ENCODE measurements at regions of chr6 and their contacts with region 1.

Region 1: DNA sequence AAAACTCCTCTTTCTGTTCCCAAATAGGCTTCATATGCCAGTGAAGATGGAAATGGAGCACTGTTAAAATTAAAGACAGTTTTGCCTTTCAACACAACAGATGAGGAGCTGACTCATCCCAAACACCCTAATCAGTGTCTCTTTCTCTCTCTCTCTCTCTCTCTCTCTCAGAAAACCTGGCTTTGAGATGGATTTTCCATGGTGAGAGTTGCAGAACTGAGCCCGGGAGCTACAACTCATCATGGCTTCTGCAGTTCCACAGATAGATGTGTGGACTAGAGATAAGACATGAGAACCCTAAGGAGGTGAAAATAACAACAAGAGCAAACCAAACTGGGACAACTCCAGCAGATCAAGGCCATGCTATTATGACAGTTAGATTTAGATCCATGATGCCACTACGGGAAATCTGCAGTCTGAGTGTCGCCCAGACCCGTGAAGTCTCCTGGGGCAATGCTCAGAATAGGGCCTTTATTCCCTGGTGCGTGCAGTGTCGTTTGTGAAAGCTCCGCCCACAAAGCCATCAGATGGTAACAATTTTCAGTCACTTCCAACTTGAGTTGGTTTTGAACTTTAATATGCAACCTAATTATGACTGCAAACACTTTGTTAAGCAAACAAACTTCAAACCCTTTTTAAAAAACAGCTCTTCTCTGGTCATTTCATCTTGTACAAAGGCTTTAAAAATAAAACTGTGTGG is 338.2 kb upstream of the PREP start:
- DNase-seq: no peak
- ATAC-seq: no peak; the same call in 1 of the 3 replicates
- H3K4me3 ChIP-seq: no peak overlapping the region
- H3K27ac ChIP-seq: no peak overlapping the region
- H3K4me1 ChIP-seq: peaks cover 15% of the 10 kb centered on the region
- H3K27me3 ChIP-seq: no peaks in the 10 kb centered on the region
- CTCF ChIP-seq: no peak
- EP300 ChIP-seq: no peak
- POLR2A ChIP-seq: no peak
- RAD21 ChIP-seq: no peak

Region 2: DNA sequence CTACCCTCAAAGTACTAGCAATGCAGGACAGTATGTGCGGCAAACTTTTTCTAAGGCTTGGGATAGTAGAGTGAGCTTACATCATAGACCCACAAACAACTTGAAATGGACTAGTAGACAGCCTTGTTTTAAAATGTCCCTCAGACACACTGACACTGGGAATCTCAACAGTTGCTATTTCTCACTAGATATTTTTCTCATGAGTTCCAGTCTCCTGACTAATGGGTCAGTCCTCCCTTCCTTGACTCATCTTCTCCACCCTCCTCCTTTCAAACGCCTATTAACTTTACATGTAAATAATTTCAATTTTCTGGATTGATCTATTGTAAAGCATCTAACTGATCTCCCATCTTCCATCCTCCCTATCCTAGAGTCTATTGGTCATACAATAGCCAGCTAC is 29.9 kb before region 1 on chr6:
- CTCF ChIA-PET with region 1: no interaction called
- POLR2A ChIA-PET with region 1: no interaction called
- RAD21 ChIA-PET with region 1: no interaction called
- SMC1A ChIA-PET with region 1: no interaction called
- in situ Hi-C with region 1: no loop called
- intact Hi-C with region 1: no loop called
- DNase-seq: no peak
- ATAC-seq: no peak
- H3K4me3 ChIP-seq: no peak overlapping the region
- H3K27ac ChIP-seq: no peak overlapping the region
- H3K4me1 ChIP-seq: no peaks in the 10 kb centered on the region
- H3K27me3 ChIP-seq: no peaks in the 10 kb centered on the region
- CTCF ChIP-seq: no peak
- EP300 ChIP-seq: no peak
- POLR2A ChIP-seq: no peak
- RAD21 ChIP-seq: no peak

Region 3: GRCh38 chr6:105892577-105893262 is 151.6 kb after region 1 on chr6:
- CTCF ChIA-PET with region 1: no interaction called
- POLR2A ChIA-PET with region 1: no interaction called
- RAD21 ChIA-PET with region 1: no interaction called
- SMC1A ChIA-PET with region 1: no interaction called
- in situ Hi-C with region 1: no loop called
- intact Hi-C with region 1: loop called (anchors 5 kb)
- DNase-seq: peak; percentile 74
- ATAC-seq: peak; percentile 97
- H3K4me3 ChIP-seq: no peak overlapping the region
- H3K27ac ChIP-seq: no peak overlapping the region; the same call in 1 of the 2 replicates
- H3K4me1 ChIP-seq: peaks cover 12% of the 10 kb centered on the region
- H3K27me3 ChIP-seq: no peaks in the 10 kb centered on the region; a peak in 1 of 4 replicates
- CTCF ChIP-seq: no peak
- EP300 ChIP-seq: peak; percentile 66 to 85; a peak in 3 of 4 replicates
- POLR2A ChIP-seq: no peak
- RAD21 ChIP-seq: no peak

Measured in GM12878 (cell line).